ENCODE measurements at regions of chr5 and their contacts with region 1.

Region 1: GRCh38 chr5:128213340-128213739 is 129.8 kb downstream of the SLC12A2 start:
- DNase-seq: peak; percentile 77
- ATAC-seq: peak; percentile 68
- H3K4me3 ChIP-seq: no peak overlapping the region
- H3K27ac ChIP-seq: no peak overlapping the region
- H3K4me1 ChIP-seq: peaks cover 3% of the 10 kb centered on the region; the same call in 1 of the 2 replicates
- H3K27me3 ChIP-seq: no peaks in the 10 kb centered on the region
- CTCF ChIP-seq: peak; percentile 92
- POLR2A ChIP-seq: 0 out of 2 replicates have a peak, but pooled peaks have one; percentile 38
- RAD21 ChIP-seq: peak; percentile 93

Region 2: GRCh38 chr5:128135286-128135685 is 78.1 kb before region 1 on chr5:
- CTCF ChIA-PET with region 1: no interaction called
- POLR2A ChIA-PET with region 1: no interaction called
- dilution Hi-C with region 1: no loop called
- in situ Hi-C with region 1: no loop called
- intact Hi-C with region 1: no loop called
- DNase-seq: peak; percentile 30
- ATAC-seq: no peak
- H3K4me3 ChIP-seq: no peak overlapping the region
- H3K27ac ChIP-seq: no peak overlapping the region
- H3K4me1 ChIP-seq: no peaks in the 10 kb centered on the region
- H3K27me3 ChIP-seq: no peaks in the 10 kb centered on the region
- CTCF ChIP-seq: no peak
- POLR2A ChIP-seq: no peak
- RAD21 ChIP-seq: no peak

Region 3: DNA sequence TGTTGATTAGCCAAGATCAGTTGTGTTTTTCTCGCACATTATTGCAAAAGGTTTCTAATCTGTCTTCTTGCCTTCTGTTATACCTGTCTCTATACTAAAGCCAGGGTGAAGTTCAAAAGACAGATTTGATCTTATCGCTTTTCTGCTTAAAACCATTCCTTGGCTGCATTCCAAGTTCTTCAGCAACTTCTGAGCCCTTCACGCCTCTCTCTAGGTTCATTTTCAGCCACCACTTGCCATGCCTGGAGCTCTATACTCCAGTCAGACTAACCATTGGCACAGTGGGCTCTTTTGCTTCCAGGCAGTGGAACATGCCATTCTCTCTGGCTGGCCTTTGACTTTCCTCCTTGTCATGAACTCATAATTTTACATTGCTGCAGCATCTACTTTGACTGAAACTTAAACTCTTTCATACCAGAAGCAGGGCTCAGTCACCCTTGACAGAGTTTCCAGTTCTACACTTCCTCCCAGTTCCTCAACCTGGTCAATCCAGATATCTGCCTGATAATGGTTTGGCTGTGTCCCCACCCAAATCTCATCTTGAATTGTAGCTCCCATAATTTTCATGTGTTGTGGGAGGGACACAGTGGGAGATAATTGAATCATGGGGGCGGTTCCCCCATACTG is 15.3 kb before region 1 on chr5:
- CTCF ChIA-PET with region 1: no interaction called
- POLR2A ChIA-PET with region 1: no interaction called
- dilution Hi-C with region 1: no loop called
- in situ Hi-C with region 1: no loop called
- intact Hi-C with region 1: no loop called
- DNase-seq: no peak
- ATAC-seq: no peak
- H3K4me3 ChIP-seq: no peak overlapping the region
- H3K27ac ChIP-seq: no peak overlapping the region
- H3K4me1 ChIP-seq: peaks cover 3% of the 10 kb centered on the region; the same call in 1 of the 2 replicates
- H3K27me3 ChIP-seq: peaks cover 2% of the 10 kb centered on the region
- CTCF ChIP-seq: no peak
- POLR2A ChIP-seq: no peak
- RAD21 ChIP-seq: no peak

Region 4: GRCh38 chr5:128264564-128265360 is 51.4 kb after region 1 on chr5:
- CTCF ChIA-PET with region 1: no interaction called
- POLR2A ChIA-PET with region 1: no interaction called
- dilution Hi-C with region 1: no loop called
- in situ Hi-C with region 1: no loop called
- intact Hi-C with region 1: loop called (anchors 5 kb)
- DNase-seq: peak; percentile 26
- ATAC-seq: peak; percentile 80
- H3K4me3 ChIP-seq: no peak overlapping the region
- H3K27ac ChIP-seq: no peak overlapping the region
- H3K4me1 ChIP-seq: peaks cover 3% of the 10 kb centered on the region; the same call in 1 of the 2 replicates
- H3K27me3 ChIP-seq: no peaks in the 10 kb centered on the region
- CTCF ChIP-seq: 0 out of 2 replicates have a peak, but pooled peaks have one; percentile 9
- POLR2A ChIP-seq: no peak
- RAD21 ChIP-seq: no peak

Region 5: GRCh38 chr5:128349044-128349858 is 135.9 kb after region 1 on chr5:
- CTCF ChIA-PET with region 1: no interaction called
- POLR2A ChIA-PET with region 1: no interaction called
- dilution Hi-C with region 1: no loop called
- in situ Hi-C with region 1: no loop called
- intact Hi-C with region 1: loop called (anchors 5 kb)
- DNase-seq: peak; percentile 10
- ATAC-seq: no peak
- H3K4me3 ChIP-seq: no peak overlapping the region
- H3K27ac ChIP-seq: no peak overlapping the region
- H3K4me1 ChIP-seq: no peaks in the 10 kb centered on the region
- H3K27me3 ChIP-seq: no peaks in the 10 kb centered on the region
- CTCF ChIP-seq: no peak
- POLR2A ChIP-seq: no peak
- RAD21 ChIP-seq: no peak

Region 6: DNA sequence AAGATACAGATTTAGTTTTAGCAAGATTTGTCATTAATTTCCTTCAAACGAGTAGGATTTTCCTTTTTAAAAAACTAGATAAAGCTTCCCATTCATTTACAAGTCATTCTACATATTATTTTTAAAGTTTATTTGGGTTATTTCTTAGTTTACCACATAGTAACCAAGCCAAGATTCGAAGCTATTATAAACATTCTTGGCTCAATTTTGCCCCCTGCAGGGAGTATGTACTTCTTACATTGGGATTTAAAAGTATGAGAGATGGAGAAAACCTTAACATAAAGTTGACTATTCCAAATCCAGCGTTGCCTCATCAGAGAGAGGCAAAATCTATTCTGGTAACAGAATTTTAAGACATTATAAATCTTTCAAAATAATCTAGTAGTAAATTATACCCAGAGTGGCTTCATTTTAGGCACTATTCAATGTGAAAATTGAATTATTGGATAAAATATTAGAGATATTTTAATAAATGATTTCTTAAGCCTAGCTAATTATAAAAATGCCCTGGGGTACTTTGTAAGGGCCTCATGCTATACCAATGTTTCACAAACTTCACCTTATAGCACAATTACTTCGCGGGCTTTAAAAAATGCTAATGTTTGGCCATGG is 285.6 kb after region 1 on chr5:
- CTCF ChIA-PET with region 1: no interaction called
- POLR2A ChIA-PET with region 1: no interaction called
- dilution Hi-C with region 1: no loop called
- in situ Hi-C with region 1: loop called (anchors 5 kb)
- intact Hi-C with region 1: loop called (anchors 1 kb)
- DNase-seq: peak; percentile 79
- ATAC-seq: peak; percentile 79
- H3K4me3 ChIP-seq: no peak overlapping the region
- H3K27ac ChIP-seq: no peak overlapping the region
- H3K4me1 ChIP-seq: peaks cover 4% of the 10 kb centered on the region
- H3K27me3 ChIP-seq: no peaks in the 10 kb centered on the region
- CTCF ChIP-seq: peak; percentile 69
- POLR2A ChIP-seq: no peak
- RAD21 ChIP-seq: peak; percentile 72

Measured in IMR-90 (cell line).